Activated CD8-positive, alpha-beta memory T cell treated with anti-CD3 and anti-CD28 coated beads, Interleukin-2, amount 10 ng/mL, durations not matched to agents 7 days and 5 days (primary cell): ENCODE measurements at regions of chr11 and their contacts with region 1.

Region 1: DNA sequence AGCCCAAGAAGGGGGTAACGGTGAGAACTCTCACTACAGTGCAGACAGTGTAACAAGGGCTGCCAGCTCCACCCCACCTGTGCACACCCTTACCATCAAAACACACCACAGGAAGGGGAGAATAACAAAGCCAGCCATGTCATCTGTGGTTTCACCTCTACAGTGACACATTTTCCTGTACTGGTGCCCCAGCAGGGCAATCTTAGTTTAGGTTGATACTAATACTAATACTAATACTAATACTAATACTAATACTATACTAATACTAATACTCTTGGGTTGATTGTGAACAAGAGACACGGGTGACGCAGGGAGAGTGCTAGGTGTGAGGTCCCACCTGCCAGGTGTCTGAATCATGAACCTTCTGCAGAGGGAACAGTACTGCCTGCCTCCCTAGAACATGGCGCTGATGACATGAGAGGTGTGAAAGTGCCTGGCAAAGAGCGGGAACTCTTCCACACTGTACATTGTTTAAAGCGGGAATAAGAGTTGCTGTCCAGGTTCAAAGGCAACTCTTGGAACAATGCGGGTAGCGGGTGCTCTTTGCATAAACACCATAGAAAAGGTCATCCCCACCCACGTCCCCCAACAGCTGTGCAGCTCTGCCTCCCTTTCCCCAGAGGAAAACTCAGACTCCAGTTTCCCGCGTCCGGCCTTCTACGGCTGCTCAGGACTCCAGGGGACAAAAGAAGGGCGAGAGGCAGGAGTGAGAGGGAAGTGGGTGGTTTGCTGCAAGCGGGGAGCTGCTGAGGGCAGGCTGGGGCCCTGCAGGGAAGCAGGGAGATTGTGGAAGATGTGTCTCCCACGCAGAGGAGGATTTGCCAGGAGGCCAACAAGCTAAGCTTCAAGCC is 25.0 kb upstream of the TMPRSS4 start:
- DNase-seq: peak; percentile 87
- ATAC-seq: peak; percentile 82
- H3K4me3 Mint-ChIP-seq: peak overlapping the region; percentile 9
- H3K27ac Mint-ChIP-seq: peak overlapping the region; percentile 90
- H3K4me1 Mint-ChIP-seq: peaks cover 67% of the 10 kb centered on the region
- H3K27me3 Mint-ChIP-seq: peaks cover 3% of the 10 kb centered on the region

Region 2: DNA sequence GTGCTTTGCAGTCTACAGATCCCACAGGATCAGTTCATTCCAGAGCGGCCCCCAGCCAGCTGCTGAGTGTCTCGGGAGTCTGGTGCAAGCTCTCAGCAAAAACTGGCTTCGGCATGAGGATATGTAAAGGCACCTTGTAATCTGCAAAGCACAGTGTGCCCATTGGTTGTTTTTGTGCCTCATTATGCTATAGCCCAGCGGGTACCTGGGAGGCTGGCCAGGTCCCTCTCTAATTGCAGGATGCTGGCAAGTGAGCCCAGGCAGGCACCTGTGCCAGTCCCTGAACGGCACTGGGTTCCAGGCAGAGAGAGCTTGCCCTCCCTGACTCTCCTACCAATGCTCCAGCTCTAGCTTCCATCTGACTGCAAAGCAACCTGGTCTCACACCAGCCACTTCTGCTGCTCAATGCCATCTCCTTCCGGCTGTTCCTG is 383.5 kb before region 1 on chr11:
- CTCF ChIA-PET with region 1: no interaction called
- DNase-seq: no peak
- ATAC-seq: no peak
- H3K4me3 Mint-ChIP-seq: no peak overlapping the region
- H3K27ac Mint-ChIP-seq: no peak overlapping the region
- H3K4me1 Mint-ChIP-seq: peaks cover 4% of the 10 kb centered on the region
- H3K27me3 Mint-ChIP-seq: peaks cover 4% of the 10 kb centered on the region

Region 3: GRCh38 chr11:117807482-117808327 is 244.1 kb before region 1 on chr11:
- CTCF ChIA-PET with region 1: interaction called, 59 read pairs
- DNase-seq: peak; percentile 85
- ATAC-seq: peak; percentile 70
- H3K4me3 Mint-ChIP-seq: no peak overlapping the region
- H3K27ac Mint-ChIP-seq: no peak overlapping the region
- H3K4me1 Mint-ChIP-seq: peaks cover 22% of the 10 kb centered on the region
- H3K27me3 Mint-ChIP-seq: peaks cover 2% of the 10 kb centered on the region

Region 4: DNA sequence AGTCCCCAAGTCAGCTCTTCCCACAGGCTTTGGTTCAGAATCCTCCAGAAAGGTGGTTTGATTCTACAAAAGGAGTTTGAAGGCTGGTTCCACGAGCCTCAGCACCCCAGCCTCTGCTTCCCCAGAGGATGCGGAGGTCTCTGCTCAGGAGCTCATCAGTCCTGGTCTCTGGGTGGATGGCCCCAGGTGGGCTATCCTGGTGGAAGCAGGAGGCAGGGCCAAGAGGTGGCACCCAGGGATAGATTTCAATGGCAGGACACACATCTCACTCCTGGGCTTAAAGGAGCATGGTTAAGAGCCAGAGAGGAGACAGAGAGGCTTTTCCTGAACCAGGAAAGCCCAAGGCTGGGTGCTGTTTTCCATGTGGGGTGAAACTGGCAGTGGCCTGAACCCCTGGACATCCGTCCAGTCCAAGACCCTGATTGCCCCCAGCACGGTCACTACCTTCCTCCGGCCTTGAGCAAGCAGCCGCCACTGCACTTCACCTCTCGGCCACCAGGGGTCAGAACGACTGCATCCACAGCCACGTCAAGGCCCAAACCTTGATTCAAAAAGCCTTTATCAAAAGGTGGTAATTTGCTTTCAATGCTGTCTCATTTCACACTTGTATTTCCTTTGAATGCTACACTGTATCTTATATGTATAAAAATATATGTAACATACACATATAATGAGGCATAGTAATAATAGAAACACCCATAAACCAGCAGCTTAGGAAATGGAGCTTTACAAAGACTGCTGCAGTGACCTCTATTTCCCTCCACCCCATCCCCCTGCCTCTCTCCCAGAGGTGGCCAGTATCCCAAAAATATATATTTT is 208.0 kb before region 1 on chr11:
- CTCF ChIA-PET with region 1: interaction called, 62 read pairs
- DNase-seq: peak; percentile 87
- ATAC-seq: peak; percentile 86
- H3K4me3 Mint-ChIP-seq: no peak overlapping the region
- H3K27ac Mint-ChIP-seq: no peak overlapping the region
- H3K4me1 Mint-ChIP-seq: peaks cover 7% of the 10 kb centered on the region
- H3K27me3 Mint-ChIP-seq: peaks cover 14% of the 10 kb centered on the region

Region 5: DNA sequence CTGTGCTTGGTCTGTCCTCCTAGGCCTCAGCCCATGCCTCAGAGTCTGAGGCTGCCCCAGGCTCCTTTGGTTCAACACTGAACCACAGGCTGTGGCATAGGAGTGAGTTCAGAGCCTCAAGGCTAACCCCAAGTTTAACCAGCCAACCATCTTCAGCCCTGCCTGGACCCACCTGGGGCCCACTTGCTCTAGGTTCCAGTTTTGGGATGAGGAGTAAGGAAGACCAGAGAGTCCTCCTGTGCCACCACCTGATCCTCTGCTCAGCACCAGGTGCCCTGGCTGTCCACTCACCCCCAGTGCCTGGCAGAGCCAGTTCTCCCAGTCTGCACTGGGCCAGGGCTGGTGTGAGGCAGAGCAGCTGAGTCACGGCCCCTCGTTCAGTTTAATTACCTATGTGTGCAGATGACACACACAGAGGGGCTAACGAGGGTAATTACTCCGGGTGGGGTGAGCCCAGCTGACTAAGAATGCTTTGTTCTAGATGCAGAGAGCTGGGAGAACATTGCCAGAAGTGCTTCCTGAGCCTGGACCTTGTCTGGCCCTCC is 110.6 kb before region 1 on chr11:
- CTCF ChIA-PET with region 1: interaction called, 284 read pairs
- DNase-seq: no peak
- ATAC-seq: peak; percentile 33
- H3K4me3 Mint-ChIP-seq: no peak overlapping the region
- H3K27ac Mint-ChIP-seq: no peak overlapping the region
- H3K4me1 Mint-ChIP-seq: peaks cover 49% of the 10 kb centered on the region
- H3K27me3 Mint-ChIP-seq: no peaks in the 10 kb centered on the region

Region 6: DNA sequence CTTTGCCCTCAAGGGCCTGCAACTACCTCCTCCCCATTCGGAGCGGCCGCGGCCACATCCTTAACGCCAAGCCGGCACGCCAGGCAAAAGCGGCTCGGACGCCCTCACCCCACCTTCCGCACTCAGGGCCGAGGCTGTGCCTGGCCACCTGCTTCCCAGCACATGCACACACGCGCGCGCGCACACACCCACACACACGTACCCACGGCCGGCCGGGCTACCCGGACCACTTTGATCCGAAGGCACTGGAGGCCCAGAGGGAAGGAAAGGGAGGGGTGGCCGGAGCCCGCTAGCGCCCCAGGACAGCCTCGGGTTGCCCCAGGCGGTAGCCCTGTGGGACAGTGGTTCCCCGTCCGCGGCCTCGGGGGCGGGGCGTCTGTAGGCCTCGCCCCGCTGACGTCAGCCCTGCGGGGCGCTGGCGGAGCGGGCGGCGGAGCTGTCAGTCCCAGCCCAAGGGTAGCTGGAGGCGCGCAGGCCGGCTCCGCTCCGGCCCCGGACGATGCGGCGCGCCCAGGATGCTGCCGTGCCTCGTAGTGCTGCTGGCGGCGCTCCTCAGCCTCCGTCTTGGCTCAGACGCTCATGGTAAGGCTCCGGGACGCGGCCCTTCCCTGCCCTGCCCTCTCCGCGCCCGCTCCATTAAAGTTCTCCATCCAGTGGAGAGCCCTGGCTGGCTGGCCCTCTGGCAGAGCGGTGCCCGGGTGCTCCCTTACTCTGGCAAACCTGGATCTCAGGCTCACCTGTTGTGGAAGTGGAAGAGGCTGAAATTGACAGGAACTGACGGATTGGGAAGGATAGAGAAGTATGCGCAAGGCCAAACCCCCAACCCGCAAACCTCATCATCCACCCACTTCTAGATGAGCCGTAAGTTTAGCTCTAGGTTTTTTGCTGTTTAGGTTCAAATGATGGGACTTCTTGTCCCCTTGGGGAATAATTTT is 65.6 kb before region 1 on chr11 and contains the start of gene IL10RA:
- CTCF ChIA-PET with region 1: interaction called, 346 read pairs
- DNase-seq: peak; percentile 90
- ATAC-seq: peak; percentile 91
- H3K4me3 Mint-ChIP-seq: peak within 1 kb of the TSS; percentile 96
- H3K27ac Mint-ChIP-seq: peak within 1 kb of the TSS; percentile 97
- H3K4me1 Mint-ChIP-seq: peaks cover 70% of the 10 kb centered on the region
- H3K27me3 Mint-ChIP-seq: no peaks in the 10 kb centered on the region
- total RNA-seq, gene IL10RA: 247 to 260 TPM

Region 7: GRCh38 chr11:118071416-118072030 is 19.7 kb after region 1 on chr11:
- CTCF ChIA-PET with region 1: interaction called, 19 read pairs
- DNase-seq: no peak
- ATAC-seq: no peak
- H3K4me3 Mint-ChIP-seq: no peak overlapping the region
- H3K27ac Mint-ChIP-seq: no peak overlapping the region
- H3K4me1 Mint-ChIP-seq: peaks cover 6% of the 10 kb centered on the region
- H3K27me3 Mint-ChIP-seq: peaks cover 10% of the 10 kb centered on the region

Region 8: DNA sequence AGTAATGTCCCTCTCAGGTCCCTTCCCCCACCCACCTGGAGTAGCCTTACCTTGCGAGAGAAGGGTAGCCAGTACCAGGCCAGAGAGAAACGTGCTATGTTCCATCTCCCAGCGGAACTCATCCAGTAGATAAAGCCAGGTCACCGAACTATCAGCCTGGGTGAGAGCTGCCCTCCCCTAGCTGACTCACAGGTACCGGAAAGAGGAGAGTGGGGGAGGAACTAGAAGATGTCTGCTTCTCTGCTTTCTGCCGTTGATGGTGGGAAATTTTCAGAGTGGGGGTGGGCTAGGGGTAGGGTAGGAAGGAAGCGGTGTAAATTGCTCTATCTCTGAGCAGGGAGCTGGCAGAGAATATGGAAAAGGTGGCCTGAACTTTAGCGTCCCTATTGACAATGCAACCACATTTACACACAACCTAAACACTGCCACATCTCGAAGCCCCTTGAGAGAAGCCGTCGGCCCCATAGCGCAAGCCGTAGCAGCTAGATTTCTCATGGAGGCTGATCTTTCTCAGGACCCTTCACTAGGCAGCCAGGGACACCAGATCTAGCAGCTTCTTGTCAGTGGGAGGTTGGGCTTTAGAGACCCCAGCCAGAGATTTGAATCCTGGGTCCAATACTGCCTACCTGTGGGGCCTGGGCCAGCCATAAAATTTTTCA is 290.8 kb after region 1 on chr11 and contains the start of gene CD3D:
- CTCF ChIA-PET with region 1: no interaction called
- DNase-seq: peak; percentile 84
- ATAC-seq: peak; percentile 47
- H3K4me3 Mint-ChIP-seq: peak within 1 kb of the TSS; percentile 87
- H3K27ac Mint-ChIP-seq: peak within 1 kb of the TSS; percentile 97
- H3K4me1 Mint-ChIP-seq: peaks cover 68% of the 10 kb centered on the region
- H3K27me3 Mint-ChIP-seq: no peaks in the 10 kb centered on the region
- total RNA-seq, gene CD3D: 428 to 526 TPM